Stomach (tissue), 19 donors: ENCODE measurements at regions of chr4 and their contacts with region 1.

Region 1: DNA sequence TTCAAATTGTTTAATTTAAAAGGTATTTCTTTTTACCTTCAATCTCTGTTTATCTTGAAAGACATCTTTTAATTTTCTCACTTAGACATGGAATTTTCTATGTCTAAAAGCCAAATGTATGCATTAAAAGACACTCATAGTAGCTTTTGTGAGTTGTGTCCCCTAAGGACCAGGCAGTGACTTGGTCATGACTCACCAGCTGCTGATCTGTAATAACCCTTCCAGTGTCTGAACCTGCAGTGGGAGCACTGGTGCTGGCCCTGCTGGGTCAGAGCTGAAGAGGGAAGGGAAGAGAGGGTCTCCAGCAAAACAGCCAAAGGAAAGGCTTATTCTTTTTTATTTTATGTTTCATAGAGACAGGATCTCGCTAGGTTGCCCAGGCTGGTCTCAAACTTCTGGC is 31.1 kb upstream of the SH3D19 start:
- DNase-seq: no peak
- H3K4me3 ChIP-seq: no peak overlapping the region
- H3K27ac ChIP-seq: no peak overlapping the region
- H3K4me1 ChIP-seq: no peaks in the 10 kb centered on the region
- H3K27me3 ChIP-seq: no peaks in the 10 kb centered on the region
- CTCF ChIP-seq: no peak
- EP300 ChIP-seq: no peak
- POLR2A ChIP-seq: no peak

Region 2: DNA sequence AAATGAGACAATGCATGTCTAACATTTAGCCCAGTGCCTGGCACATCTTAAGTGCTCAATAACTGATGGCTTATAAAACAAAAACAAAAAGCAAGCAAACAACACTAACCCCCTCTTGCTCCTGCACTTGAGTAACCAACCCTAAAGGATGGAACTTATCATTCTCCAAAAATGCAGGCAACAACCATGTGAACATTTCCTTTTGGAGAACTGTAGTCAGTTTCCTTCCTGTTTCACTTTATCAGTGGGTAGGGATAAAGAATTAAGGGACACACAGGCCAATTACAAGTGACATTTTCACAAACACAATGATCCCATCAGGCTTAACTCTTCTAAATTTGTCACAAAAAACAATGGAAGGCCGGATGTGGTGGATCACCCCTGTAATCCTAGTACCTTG is 226.7 kb before region 1 on chr4:
- intact Hi-C with region 1: loop called (anchors 10 kb)
- DNase-seq: no peak
- H3K4me3 ChIP-seq: no peak overlapping the region
- H3K27ac ChIP-seq: no peak overlapping the region
- H3K4me1 ChIP-seq: no peaks in the 10 kb centered on the region
- H3K27me3 ChIP-seq: no peaks in the 10 kb centered on the region
- CTCF ChIP-seq: no peak
- EP300 ChIP-seq: no peak
- POLR2A ChIP-seq: no peak

Region 3: GRCh38 chr4:151408630-151409469 is 52.3 kb after region 1 on chr4 and contains the start of gene FHIP1A:
- intact Hi-C with region 1: no loop called
- DNase-seq: peak; percentile 95 to 96
- H3K4me3 ChIP-seq: peak within 1 kb of the TSS; percentile 49 to 67 (median 52)
- H3K27ac ChIP-seq: peak within 1 kb of the TSS; percentile 80 to 92 (median 87)
- H3K4me1 ChIP-seq: peaks cover 11 to 32% (median 27%) of the 10 kb centered on the region in 4 donors
- H3K27me3 ChIP-seq: peaks cover 0 to 4% (median 3%) of the 10 kb centered on the region in 3 donors
- CTCF ChIP-seq: peak in 1 of 7 experiments; percentile 9
- EP300 ChIP-seq: no peak
- POLR2A ChIP-seq: peak in 2 of 4 donors; percentile 25 to 62
- total RNA-seq, gene FHIP1A: 11.6 to 177 (median 17.6) TPM

Region 4: GRCh38 chr4:151690876-151691275 is 334.4 kb after region 1 on chr4:
- intact Hi-C with region 1: no loop called
- DNase-seq: no peak
- H3K4me3 ChIP-seq: no peak overlapping the region
- H3K27ac ChIP-seq: peak overlapping the region; percentile 13 to 82 (median 79)
- H3K4me1 ChIP-seq: peaks cover 51 to 71% (median 61%) of the 10 kb centered on the region in 4 donors
- H3K27me3 ChIP-seq: no peaks in the 10 kb centered on the region
- CTCF ChIP-seq: no peak
- EP300 ChIP-seq: no peak
- POLR2A ChIP-seq: no peak